Right cardiac atrium (tissue), 5 donors: ENCODE measurements at regions of chr6 and their contacts with region 1.

Region 1: DNA sequence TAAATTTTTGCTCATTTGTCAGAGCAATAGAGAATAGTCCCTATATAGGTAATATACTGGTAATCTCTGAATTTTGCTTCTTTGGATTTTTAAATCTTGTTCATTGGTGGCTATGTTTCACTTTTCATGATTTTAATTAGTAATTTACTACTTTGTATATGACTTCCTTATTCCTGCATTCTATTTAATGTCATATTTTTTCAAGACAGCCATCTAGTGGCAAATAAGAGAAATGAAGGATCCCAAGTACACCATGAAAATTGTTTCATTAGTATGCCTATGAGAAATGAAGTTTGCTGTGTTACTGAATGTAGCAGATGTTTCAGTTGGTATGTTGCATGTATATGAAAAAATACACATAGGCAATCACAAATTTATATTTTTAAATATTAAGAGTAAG is 82.4 kb downstream of the ZNF292 start:
- DNase-seq: no peak
- ATAC-seq: no peak
- H3K4me3 ChIP-seq: no peak overlapping the region
- H3K27ac ChIP-seq: no peak overlapping the region
- H3K4me1 ChIP-seq: peaks cover 2% of the 10 kb centered on the region
- H3K27me3 ChIP-seq: no peaks in the 10 kb centered on the region

Region 2: GRCh38 chr6:87066449-87067333 is 171.1 kb before region 1 on chr6:
- intact Hi-C with region 1: loop called in 2 of 4 experiments (anchors 10 kb)
- DNase-seq: peak in 2 of 3 donors; percentile 40 to 51
- ATAC-seq: no peak
- H3K4me3 ChIP-seq: no peak overlapping the region
- H3K27ac ChIP-seq: no peak overlapping the region
- H3K4me1 ChIP-seq: no peaks in the 10 kb centered on the region
- H3K27me3 ChIP-seq: no peaks in the 10 kb centered on the region

Region 3: GRCh38 chr6:87078983-87079616 is 158.7 kb before region 1 on chr6:
- intact Hi-C with region 1: loop called in 1 of 4 experiments (anchors 10 kb)
- DNase-seq: peak; percentile 72 to 83 (median 81)
- ATAC-seq: peak; percentile 82
- H3K4me3 ChIP-seq: no peak overlapping the region
- H3K27ac ChIP-seq: no peak overlapping the region
- H3K4me1 ChIP-seq: no peaks in the 10 kb centered on the region
- H3K27me3 ChIP-seq: no peaks in the 10 kb centered on the region

Region 4: DNA sequence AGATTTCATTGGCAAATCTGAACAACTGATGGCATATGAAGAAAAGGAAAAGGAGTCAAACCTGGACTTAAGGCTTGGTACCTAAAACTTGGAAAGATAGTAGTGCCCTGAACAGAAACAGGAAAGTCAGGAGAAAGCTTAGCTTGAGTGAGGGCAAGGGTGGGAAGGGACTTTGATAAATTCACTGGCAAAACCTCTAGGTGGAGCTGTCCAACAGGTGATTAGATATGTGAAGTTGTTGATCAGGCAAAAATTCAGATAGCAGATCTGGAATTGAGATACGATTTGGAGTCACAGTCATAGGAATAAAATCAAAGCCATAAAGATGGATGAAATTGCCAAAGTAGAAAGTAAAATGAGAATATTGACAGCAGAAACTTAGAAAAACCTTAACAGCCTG is 98.6 kb before region 1 on chr6:
- intact Hi-C with region 1: loop called in 1 of 4 experiments (anchors 10 kb)
- DNase-seq: no peak
- ATAC-seq: peak; percentile 46 to 50
- H3K4me3 ChIP-seq: no peak overlapping the region
- H3K27ac ChIP-seq: no peak overlapping the region
- H3K4me1 ChIP-seq: no peaks in the 10 kb centered on the region
- H3K27me3 ChIP-seq: no peaks in the 10 kb centered on the region

Region 5: DNA sequence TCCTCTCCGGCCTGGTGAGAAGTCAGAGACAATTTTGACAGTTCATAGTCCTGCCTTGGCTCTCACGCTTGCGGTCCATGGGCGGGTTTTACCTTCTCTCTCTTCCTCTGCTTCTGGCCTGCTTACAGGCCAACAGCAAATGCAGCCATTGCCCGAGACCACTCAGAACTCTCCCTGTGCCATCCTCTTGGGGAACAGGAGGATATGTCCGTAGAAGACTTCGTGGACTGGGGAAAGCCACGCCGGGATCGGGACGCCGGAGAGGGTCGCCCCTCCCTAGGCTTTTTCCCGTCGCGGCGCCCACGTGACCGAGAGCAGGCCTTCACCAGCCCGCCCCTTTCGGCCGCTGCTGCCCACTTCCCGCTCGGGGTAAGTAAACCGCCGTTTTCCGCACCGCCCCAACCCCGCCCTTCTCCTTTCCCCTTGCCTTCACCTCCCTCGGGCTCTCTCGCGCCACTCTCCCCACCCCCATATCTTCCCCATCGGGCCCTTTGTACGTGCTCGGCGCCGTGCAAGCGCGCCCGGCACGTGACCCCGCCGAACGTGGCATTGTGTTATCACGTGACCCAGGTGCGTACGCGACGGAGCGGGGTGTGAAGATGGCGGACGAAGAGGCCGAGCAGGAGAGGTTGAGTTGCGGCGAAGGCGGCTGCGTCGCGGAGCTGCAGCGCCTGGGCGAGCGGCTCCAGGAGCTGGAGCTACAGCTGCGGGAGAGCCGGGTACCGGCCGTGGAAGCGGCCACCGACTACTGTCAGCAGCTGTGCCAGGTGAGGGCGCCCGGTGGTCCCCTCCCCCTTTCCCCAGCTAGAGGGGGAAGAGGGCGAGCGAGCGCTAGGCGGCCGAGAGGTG is 82.6 kb before region 1 on chr6 and contains the start of gene ZNF292:
- intact Hi-C with region 1: loop called in 1 of 4 experiments (anchors 10 kb)
- DNase-seq: peak; percentile 97 to 99 (median 98)
- ATAC-seq: peak; percentile 96
- H3K4me3 ChIP-seq: peak within 1 kb of the TSS; percentile 71
- H3K27ac ChIP-seq: peak within 1 kb of the TSS; percentile 98
- H3K4me1 ChIP-seq: no peaks in the 10 kb centered on the region
- H3K27me3 ChIP-seq: no peaks in the 10 kb centered on the region
- total RNA-seq, gene ZNF292: 46.7 to 58.3 (median 48.7) TPM